ENCODE measurements at regions of chr22 and their contacts with region 1.

Region 1: GRCh38 chr22:34784056-34784455 is 281.9 kb upstream of the ISX start:
- DNase-seq: no peak
- ATAC-seq: no peak
- H3K4me3 ChIP-seq: no peak overlapping the region
- H3K27ac ChIP-seq: no peak overlapping the region
- H3K4me1 ChIP-seq: no peaks in the 10 kb centered on the region
- H3K27me3 ChIP-seq: no peaks in the 10 kb centered on the region
- CTCF ChIP-seq: no peak
- POLR2A ChIP-seq: no peak

Region 2: GRCh38 chr22:34743110-34743751 is 40.8 kb before region 1 on chr22:
- in situ Hi-C with region 1: no loop called
- intact Hi-C with region 1: no loop called
- DNase-seq: no peak
- ATAC-seq: no peak
- H3K4me3 ChIP-seq: no peak overlapping the region
- H3K27ac ChIP-seq: no peak overlapping the region
- H3K4me1 ChIP-seq: no peaks in the 10 kb centered on the region
- H3K27me3 ChIP-seq: no peaks in the 10 kb centered on the region
- CTCF ChIP-seq: no peak
- POLR2A ChIP-seq: no peak

Region 3: DNA sequence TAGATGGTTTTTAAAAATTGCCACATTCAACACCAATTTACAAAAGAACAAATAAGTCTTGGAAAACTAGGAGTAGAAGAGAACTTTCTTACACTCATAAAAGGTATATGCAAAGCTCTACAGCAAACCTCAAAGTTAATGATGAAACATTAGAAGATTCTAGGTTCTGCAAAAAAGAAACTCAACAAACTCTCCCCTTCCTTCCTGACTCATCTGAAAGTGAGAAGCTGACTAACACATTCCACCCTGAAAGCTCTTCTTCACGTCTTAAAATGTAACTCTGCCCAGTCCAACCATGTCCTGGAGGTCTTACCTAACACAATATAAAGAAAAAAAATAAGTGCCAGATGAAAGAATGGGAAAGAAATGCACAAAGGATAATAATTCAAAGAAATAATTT is 63.0 kb after region 1 on chr22:
- in situ Hi-C with region 1: loop called in 1 of 4 experiments (anchors 10 kb)
- intact Hi-C with region 1: no loop called
- DNase-seq: no peak
- ATAC-seq: no peak
- H3K4me3 ChIP-seq: no peak overlapping the region
- H3K27ac ChIP-seq: no peak overlapping the region
- H3K4me1 ChIP-seq: no peaks in the 10 kb centered on the region
- H3K27me3 ChIP-seq: no peaks in the 10 kb centered on the region
- CTCF ChIP-seq: no peak
- POLR2A ChIP-seq: no peak

Measured in gastrocnemius medialis (tissue), 4 donors.